ENCODE measurements at regions of chr12 and their contacts with region 1.

Region 1: GRCh38 chr12:94101738-94102660 is 46.4 kb upstream of the PLXNC1 start:
- DNase-seq: peak; percentile 82 to 86 (median 83)
- H3K4me3 ChIP-seq: peak overlapping the region; percentile 54 to 82
- H3K4me3 Mint-ChIP-seq: peak overlapping the region; percentile 85 to 91 (median 88)
- H3K27ac ChIP-seq: peak overlapping the region; percentile 20
- H3K27ac Mint-ChIP-seq: peak overlapping the region; percentile 65 to 91 (median 72)
- H3K4me1 ChIP-seq: peaks cover 10% of the 10 kb centered on the region
- H3K4me1 Mint-ChIP-seq: peaks cover 5 to 21% (median 7%) of the 10 kb centered on the region in 4 donors
- H3K27me3 ChIP-seq: peaks cover 2% of the 10 kb centered on the region
- H3K27me3 Mint-ChIP-seq: peaks cover 10 to 11% of the 10 kb centered on the region in 2 donors

Region 2: GRCh38 chr12:92987362-92987761 is 1114.6 kb before region 1 on chr12:
- CTCF ChIA-PET with region 1: interaction called, 82 read pairs
- POLR2A ChIA-PET with region 1: interaction called, 5 read pairs
- intact Hi-C with region 1: loop called (anchors 1 kb)
- DNase-seq: peak in 4 of 5 donors; percentile 52 to 61 (median 57)
- H3K4me3 ChIP-seq: no peak overlapping the region
- H3K4me3 Mint-ChIP-seq: peak overlapping the region in 3 of 8 donors; percentile 27 to 33 (median 30)
- H3K27ac ChIP-seq: no peak overlapping the region
- H3K27ac Mint-ChIP-seq: peak overlapping the region in 1 of 7 donors; percentile 9
- H3K4me1 ChIP-seq: peaks cover 7% of the 10 kb centered on the region
- H3K4me1 Mint-ChIP-seq: peaks cover 8 to 11% (median 9%) of the 10 kb centered on the region in 4 donors
- H3K27me3 ChIP-seq: no peaks in the 10 kb centered on the region
- H3K27me3 Mint-ChIP-seq: no peaks in the 10 kb centered on the region

Region 3: GRCh38 chr12:93476555-93476954 is 625.4 kb before region 1 on chr12:
- CTCF ChIA-PET with region 1: interaction called, 10 read pairs
- POLR2A ChIA-PET with region 1: interaction called, 3 read pairs
- intact Hi-C with region 1: no loop called
- DNase-seq: no peak
- H3K4me3 ChIP-seq: no peak overlapping the region
- H3K4me3 Mint-ChIP-seq: no peak overlapping the region
- H3K27ac ChIP-seq: no peak overlapping the region
- H3K27ac Mint-ChIP-seq: peak overlapping the region in 1 of 7 donors; percentile 47
- H3K4me1 ChIP-seq: no peaks in the 10 kb centered on the region
- H3K4me1 Mint-ChIP-seq: peaks cover 3 to 5% (median 4%) of the 10 kb centered on the region in 4 donors
- H3K27me3 ChIP-seq: no peaks in the 10 kb centered on the region
- H3K27me3 Mint-ChIP-seq: no peaks in the 10 kb centered on the region

Region 4: GRCh38 chr12:93526786-93527428 is 575.1 kb before region 1 on chr12:
- CTCF ChIA-PET with region 1: interaction called, 19 read pairs
- POLR2A ChIA-PET with region 1: interaction called, 3 read pairs
- intact Hi-C with region 1: no loop called
- DNase-seq: no peak
- H3K4me3 ChIP-seq: no peak overlapping the region
- H3K4me3 Mint-ChIP-seq: no peak overlapping the region
- H3K27ac ChIP-seq: no peak overlapping the region
- H3K27ac Mint-ChIP-seq: no peak overlapping the region
- H3K4me1 ChIP-seq: peaks cover 5% of the 10 kb centered on the region
- H3K4me1 Mint-ChIP-seq: peaks cover 6 to 13% (median 9%) of the 10 kb centered on the region in 4 donors
- H3K27me3 ChIP-seq: no peaks in the 10 kb centered on the region
- H3K27me3 Mint-ChIP-seq: peaks cover 1 to 7% of the 10 kb centered on the region in 2 donors

Region 5: DNA sequence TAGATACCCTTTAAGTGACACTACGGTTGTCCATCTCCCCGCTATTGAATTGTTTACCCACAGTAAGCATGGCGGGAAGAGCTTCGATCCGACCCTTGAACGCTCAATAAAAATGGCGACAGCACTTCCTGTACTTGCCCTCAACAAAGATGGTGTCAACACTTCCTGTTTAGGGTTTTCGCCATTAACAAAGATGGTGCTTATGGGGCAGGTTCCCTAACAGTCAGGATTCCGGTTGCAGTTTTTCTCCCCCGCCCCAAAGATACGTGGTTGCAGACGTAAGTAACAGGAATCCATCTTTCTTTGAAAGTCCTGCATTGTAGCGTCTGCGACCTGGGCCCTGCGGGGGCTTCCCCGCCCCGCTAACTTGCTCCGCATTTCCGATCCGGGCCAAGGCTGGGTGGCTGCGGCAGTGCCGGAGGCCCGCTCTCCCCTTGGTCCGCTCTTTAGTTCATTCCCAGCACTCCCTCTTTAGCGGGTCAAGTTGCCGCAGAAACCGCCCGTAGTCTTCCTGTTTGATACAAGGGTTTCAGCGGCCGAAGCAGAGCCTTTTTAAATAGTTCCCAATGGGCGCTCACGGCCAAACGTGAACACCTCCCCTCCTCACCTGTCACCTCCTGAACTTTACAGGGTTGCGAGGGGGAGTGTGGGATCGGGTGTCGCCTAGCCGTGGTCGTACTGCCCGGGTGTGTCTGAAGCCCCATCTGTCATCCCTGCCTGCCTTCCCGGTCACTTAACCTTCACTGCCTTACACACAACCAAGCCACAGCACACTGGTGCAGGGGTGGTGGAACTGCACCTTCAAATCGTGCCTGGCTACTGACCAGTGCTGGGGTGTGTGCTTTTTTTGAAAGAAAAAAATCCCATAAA is 424.6 kb before region 1 on chr12 and contains the start of gene CRADD:
- CTCF ChIA-PET with region 1: interaction called, 23 read pairs
- POLR2A ChIA-PET with region 1: interaction called, 12 read pairs
- intact Hi-C with region 1: loop called (anchors 1 kb)
- DNase-seq: peak; percentile 93 to 97 (median 96)
- H3K4me3 ChIP-seq: peak within 1 kb of the TSS; percentile 71 to 73
- H3K4me3 Mint-ChIP-seq: peak within 1 kb of the TSS; percentile 97 to 99 (median 98)
- H3K27ac ChIP-seq: peak within 1 kb of the TSS; percentile 99
- H3K27ac Mint-ChIP-seq: peak within 1 kb of the TSS; percentile 99 to 100 (median 100)
- H3K4me1 ChIP-seq: peaks cover 19% of the 10 kb centered on the region
- H3K4me1 Mint-ChIP-seq: peaks cover 20 to 37% (median 28%) of the 10 kb centered on the region in 4 donors
- H3K27me3 ChIP-seq: no peaks in the 10 kb centered on the region
- H3K27me3 Mint-ChIP-seq: peaks cover 11 to 12% of the 10 kb centered on the region in 2 donors
- total RNA-seq, gene CRADD: 15.7 to 16.0 TPM

Region 6: DNA sequence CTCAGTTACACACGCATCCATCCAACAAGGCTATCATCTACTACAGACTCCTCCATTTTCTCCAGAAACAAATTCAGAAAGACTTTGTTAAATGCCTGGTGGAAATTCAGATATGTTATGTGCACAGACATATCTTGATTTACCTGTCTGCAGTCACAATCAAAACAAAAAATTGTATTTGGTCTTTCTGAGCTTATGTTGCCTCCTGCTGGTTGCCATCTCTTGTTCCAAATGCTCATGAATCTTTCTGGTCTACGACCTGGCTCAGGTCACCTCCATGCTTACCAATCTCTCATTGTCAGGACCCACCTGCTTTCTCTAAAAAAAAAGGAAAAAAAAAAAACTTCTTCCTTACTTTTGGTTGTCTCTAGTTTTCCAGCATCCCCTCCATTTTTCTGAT is 122.8 kb before region 1 on chr12:
- CTCF ChIA-PET with region 1: interaction called, 66 read pairs
- POLR2A ChIA-PET with region 1: interaction called, 4 read pairs
- intact Hi-C with region 1: loop called (anchors 1 kb)
- DNase-seq: peak in 4 of 5 donors; percentile 20 to 45 (median 28)
- H3K4me3 ChIP-seq: no peak overlapping the region
- H3K4me3 Mint-ChIP-seq: no peak overlapping the region
- H3K27ac ChIP-seq: no peak overlapping the region
- H3K27ac Mint-ChIP-seq: peak overlapping the region in 1 of 7 donors; percentile 24
- H3K4me1 ChIP-seq: no peaks in the 10 kb centered on the region
- H3K4me1 Mint-ChIP-seq: peaks cover 0 to 12% (median 7%) of the 10 kb centered on the region in 4 donors
- H3K27me3 ChIP-seq: no peaks in the 10 kb centered on the region
- H3K27me3 Mint-ChIP-seq: no peaks in the 10 kb centered on the region

Region 7: GRCh38 chr12:94126067-94126466 is 24.1 kb after region 1 on chr12:
- CTCF ChIA-PET with region 1: interaction called, 49 read pairs
- POLR2A ChIA-PET with region 1: interaction called, 3 read pairs
- intact Hi-C with region 1: no loop called
- DNase-seq: peak in 1 of 5 donors; percentile 1
- H3K4me3 ChIP-seq: no peak overlapping the region
- H3K4me3 Mint-ChIP-seq: peak overlapping the region in 6 of 8 donors; percentile 38 to 64 (median 60)
- H3K27ac ChIP-seq: no peak overlapping the region
- H3K27ac Mint-ChIP-seq: peak overlapping the region; percentile 6 to 89 (median 51)
- H3K4me1 ChIP-seq: peaks cover 53% of the 10 kb centered on the region
- H3K4me1 Mint-ChIP-seq: peaks cover 39 to 66% (median 51%) of the 10 kb centered on the region in 4 donors
- H3K27me3 ChIP-seq: no peaks in the 10 kb centered on the region
- H3K27me3 Mint-ChIP-seq: peaks cover 0 to 4% of the 10 kb centered on the region in 2 donors